A549 (cell line): ENCODE measurements at regions of chr7 and their contacts with region 1.

Region 1: DNA sequence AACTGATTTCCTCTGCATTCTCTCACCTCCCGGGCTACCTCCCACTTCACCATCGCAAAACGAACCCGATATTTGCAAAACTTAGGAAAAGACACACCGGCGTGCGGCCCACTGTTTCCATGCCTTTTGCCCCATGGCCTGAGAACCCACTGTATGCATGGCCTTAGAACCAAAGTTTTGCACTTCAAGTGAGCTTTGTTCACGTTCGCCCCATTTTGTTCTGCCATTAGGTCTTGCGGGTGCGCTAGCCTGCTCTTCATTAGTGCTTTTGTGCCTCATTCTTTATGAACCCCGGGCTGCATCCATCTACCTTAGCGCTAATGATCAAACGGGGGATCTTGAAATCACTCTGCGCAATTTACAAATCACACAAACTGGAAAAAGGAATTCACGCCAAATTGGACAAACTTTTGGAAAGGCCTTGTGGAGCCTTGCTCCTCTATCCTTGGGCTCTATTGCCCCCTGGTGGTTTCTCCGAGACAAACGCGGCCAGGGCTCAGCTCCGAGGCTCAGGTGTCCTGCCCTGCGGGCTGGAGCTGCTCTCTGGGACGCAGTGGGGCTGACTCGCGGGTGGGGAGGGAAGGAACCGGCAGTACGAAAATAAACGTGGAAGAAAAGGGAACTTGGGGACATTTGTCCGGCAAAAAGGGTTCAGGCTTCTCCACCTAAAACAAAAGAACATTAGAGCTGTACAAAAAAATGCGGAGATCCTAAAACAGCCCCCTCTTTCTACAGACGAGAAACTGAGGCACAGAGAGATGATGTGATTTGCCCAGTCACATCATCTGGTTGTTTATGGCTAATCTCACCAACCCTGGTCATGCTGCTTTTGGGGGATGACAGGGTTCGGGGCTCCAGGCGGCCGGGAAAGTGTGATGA is 300.4 kb upstream of the NFE2L3 start:
- DNase-seq: peak; percentile 65 to 75
- ATAC-seq: peak; percentile 67 to 82
- H3K4me3 ChIP-seq: peak overlapping the region; percentile 22; the same call in 1 of the 3 replicates
- H3K27ac ChIP-seq: peak overlapping the region in 1 of 2 experiments; percentile 86; a peak in 2 of 6 replicates
- H3K4me1 ChIP-seq: peaks cover 52% of the 10 kb centered on the region
- CTCF ChIP-seq: peak; percentile 79
- EP300 ChIP-seq: no peak
- POLR2A ChIP-seq: no peak
- RAD21 ChIP-seq: peak; percentile 91 to 93

Region 2: DNA sequence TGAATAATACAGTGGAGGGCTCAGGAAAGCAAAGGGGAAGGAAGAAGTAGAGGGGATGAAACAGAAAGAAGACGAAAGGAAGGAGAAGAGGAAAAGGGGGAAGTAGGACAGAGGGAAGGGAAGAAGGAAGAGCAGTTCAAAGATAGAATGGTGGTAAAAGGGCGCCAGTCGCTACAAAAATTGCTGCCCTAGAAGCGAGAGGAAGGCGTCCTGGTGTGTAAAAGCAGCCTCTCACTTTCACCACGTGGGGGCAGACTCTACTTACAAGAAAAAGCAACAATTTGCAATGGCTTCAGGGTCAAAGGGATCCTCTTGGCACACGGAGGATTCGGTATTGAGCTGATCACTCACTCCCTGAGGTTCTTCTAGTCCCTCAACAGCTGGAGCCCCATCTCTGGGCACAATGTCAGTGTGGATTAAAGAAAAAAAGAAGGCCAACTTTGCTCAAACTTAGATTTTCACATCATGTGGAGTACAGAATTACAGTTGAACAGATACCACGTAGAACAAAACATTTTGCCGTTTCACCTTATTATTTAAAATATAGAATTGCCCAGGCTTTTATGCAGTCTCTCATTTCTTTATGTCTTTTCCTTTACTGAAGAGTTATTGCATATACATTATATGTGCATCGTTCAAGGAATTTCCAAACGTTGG is 591.9 kb before region 1 on chr7:
- CTCF ChIA-PET with region 1: interaction called, 24 read pairs
- POLR2A ChIA-PET with region 1: no interaction called
- DNase-seq: peak; percentile 38 to 76
- ATAC-seq: peak; percentile 84 to 95
- H3K4me3 ChIP-seq: no peak overlapping the region
- H3K27ac ChIP-seq: no peak overlapping the region
- H3K4me1 ChIP-seq: no peaks in the 10 kb centered on the region
- CTCF ChIP-seq: peak; percentile 88
- EP300 ChIP-seq: no peak
- POLR2A ChIP-seq: no peak
- RAD21 ChIP-seq: peak; percentile 86 to 90

Region 3: GRCh38 chr7:25389489-25390106 is 462.0 kb before region 1 on chr7:
- CTCF ChIA-PET with region 1: interaction called, 15 read pairs
- POLR2A ChIA-PET with region 1: no interaction called
- DNase-seq: peak; percentile 38 to 54
- ATAC-seq: peak; percentile 57 to 77; a peak in 4 of 6 replicates
- H3K4me3 ChIP-seq: no peak overlapping the region
- H3K27ac ChIP-seq: no peak overlapping the region
- H3K4me1 ChIP-seq: no peaks in the 10 kb centered on the region
- CTCF ChIP-seq: peak; percentile 59
- EP300 ChIP-seq: no peak
- POLR2A ChIP-seq: no peak
- RAD21 ChIP-seq: peak; percentile 47 to 62; a peak in 4 of 5 replicates

Region 4: DNA sequence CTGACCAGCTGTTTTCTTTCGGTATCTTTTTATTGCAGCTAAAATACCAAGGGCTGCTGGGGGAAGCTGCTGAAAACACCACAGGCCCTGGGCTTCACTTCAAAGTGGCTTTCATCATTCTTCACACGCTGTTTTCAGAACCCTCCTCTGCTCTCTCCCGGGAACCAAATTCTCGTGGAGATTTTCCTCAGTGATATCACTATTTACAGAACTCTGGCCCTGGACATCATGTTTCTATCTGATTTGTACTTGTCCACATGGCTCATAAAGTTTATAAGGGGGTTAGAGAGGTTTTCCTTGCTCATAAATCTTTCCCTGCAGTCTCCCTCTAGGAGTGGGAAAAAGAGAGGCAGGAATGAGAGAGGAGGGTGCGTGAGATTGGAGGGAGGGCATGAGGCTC is 445.8 kb before region 1 on chr7:
- CTCF ChIA-PET with region 1: no interaction called
- POLR2A ChIA-PET with region 1: no interaction called
- DNase-seq: no peak
- ATAC-seq: no peak
- H3K4me3 ChIP-seq: no peak overlapping the region
- H3K27ac ChIP-seq: no peak overlapping the region
- H3K4me1 ChIP-seq: no peaks in the 10 kb centered on the region
- CTCF ChIP-seq: no peak
- EP300 ChIP-seq: no peak
- POLR2A ChIP-seq: no peak
- RAD21 ChIP-seq: no peak

Region 5: DNA sequence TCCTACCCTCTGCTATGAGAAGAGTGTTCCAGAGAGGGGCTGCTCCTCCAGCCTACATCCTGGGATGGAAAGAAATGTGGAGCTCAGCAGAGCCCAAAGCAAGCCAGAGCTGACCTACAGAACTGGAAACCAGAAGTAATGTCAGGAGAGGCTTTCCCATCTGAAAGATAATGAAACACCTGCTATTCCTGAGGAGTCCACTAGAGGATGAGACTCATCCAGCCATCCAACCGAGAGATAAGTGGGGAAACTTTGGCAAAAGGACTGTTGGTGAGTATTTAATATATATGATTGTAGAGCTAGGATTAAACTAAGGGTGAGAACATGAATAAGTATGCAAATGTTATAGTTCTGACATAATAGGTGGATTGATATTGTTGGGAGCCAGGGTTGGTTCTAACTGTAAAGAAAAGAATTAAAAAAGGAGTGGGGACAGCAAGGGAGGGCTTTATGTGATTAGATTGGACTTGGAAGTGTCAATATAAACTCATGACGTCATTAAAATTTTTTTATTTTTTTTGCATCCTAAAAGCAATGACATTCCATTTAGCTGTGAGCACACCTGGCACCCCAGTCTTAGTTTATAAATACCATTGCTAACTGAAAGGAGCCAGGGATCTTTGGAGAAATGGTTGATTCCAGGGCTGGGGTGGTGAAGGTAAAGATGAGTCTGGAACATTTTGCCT is 12.3 kb before region 1 on chr7:
- CTCF ChIA-PET with region 1: interaction called, 51 read pairs
- POLR2A ChIA-PET with region 1: no interaction called
- DNase-seq: peak in 1 of 2 experiments; percentile 30
- ATAC-seq: peak; percentile 50 to 85; a peak in 4 of 6 replicates
- H3K4me3 ChIP-seq: no peak overlapping the region
- H3K27ac ChIP-seq: no peak overlapping the region
- H3K4me1 ChIP-seq: no peaks in the 10 kb centered on the region
- CTCF ChIP-seq: no peak
- EP300 ChIP-seq: no peak
- POLR2A ChIP-seq: no peak
- RAD21 ChIP-seq: 0 out of 5 replicates have a peak, but pooled peaks of 1 of the 2 experiments have one; percentile 13

Region 6: GRCh38 chr7:25944777-25945515 is 93.4 kb after region 1 on chr7:
- CTCF ChIA-PET with region 1: no interaction called
- POLR2A ChIA-PET with region 1: no interaction called
- DNase-seq: no peak
- ATAC-seq: no peak
- H3K4me3 ChIP-seq: no peak overlapping the region
- H3K27ac ChIP-seq: no peak overlapping the region
- H3K4me1 ChIP-seq: no peaks in the 10 kb centered on the region
- CTCF ChIP-seq: no peak
- EP300 ChIP-seq: no peak
- POLR2A ChIP-seq: no peak
- RAD21 ChIP-seq: no peak